ENCODE measurements at regions of chr7 and their contacts with region 1.

Region 1: DNA sequence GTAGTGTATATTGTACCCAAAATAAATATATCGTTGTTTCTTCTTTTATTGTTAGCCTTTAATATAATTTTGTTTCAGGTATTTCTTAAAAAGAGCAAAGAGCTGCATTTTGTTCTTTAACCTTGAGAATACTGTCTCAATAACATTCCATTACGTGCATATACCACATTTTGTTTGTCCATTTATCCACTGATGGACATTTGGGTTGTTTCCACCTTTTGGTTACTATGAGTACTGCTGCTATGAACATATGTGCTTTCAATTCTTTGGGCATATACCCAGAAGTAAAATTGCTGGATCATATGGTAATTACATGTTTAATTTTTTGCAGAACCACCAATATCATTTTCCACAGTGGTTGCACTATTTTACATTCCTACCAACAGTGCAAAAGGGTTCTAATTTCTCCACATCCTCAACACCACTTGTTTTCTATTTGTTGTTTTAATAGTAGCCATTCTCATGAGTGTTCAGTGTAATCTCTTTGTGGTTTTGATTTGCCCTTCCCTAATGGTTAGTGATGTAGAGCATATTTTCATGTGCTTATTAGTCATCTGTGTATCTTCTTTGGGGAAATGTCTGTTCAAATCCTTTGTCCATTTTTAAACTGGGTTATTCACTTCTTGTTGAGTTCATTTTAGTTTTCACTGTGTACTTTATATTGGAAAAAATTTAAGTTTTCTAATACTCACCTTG is 102.0 kb downstream of the HIBADH start:
- DNase-seq: peak; percentile 91
- ATAC-seq: peak; percentile 95
- H3K4me3 ChIP-seq: no peak overlapping the region
- H3K27ac ChIP-seq: no peak overlapping the region
- H3K4me1 ChIP-seq: no peaks in the 10 kb centered on the region
- H3K27me3 ChIP-seq: no peaks in the 10 kb centered on the region
- CTCF ChIP-seq: no peak; the same call in 1 of the 2 replicates
- POLR2A ChIP-seq: no peak
- RAD21 ChIP-seq: no peak

Region 2: DNA sequence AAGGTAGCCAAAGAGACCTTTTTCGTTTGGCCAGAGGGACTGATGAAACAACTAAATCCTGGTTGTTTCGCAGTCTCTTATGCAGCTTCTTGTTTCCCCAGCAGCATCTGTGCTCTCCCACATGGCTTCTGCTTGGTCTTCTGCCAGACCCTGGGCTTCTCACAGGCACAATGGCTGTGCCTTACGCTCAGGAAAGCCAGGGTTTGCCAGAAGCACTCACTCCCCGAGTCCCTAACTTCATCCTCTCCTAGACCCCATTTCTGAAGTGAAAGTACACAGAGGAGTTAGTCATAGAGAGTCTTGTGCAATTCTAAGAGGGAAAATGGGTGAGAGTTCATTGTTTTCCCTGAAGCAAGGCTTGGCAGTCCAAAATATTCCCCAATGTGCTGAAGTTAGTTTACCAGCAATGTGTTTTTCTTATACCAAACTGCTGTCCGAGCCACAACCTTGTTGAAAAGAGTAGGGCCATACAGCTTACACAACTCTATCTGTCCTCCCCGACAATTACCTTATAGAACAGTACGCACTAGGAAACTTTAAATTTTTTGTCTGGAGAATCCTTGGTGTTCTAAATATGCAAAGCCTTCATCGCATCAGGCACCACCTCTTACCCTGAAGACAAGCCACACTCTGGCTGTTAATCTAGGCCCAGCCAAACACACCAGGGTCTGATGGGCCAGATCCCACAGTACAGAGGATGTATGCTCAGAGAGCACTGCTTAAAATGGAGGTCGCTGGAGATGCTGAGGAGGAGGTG is 196.2 kb before region 1 on chr7:
- CTCF ChIA-PET with region 1: no interaction called
- POLR2A ChIA-PET with region 1: no interaction called
- dilution Hi-C with region 1: no loop called
- in situ Hi-C with region 1: no loop called
- intact Hi-C with region 1: loop called (anchors 10 kb)
- DNase-seq: peak; percentile 69
- ATAC-seq: peak; percentile 83
- H3K4me3 ChIP-seq: peak overlapping the region; percentile 21; the same call in 1 of the 2 replicates
- H3K27ac ChIP-seq: peak overlapping the region; percentile 71; the same call in 1 of the 2 replicates
- H3K4me1 ChIP-seq: peaks cover 9% of the 10 kb centered on the region
- H3K27me3 ChIP-seq: peaks cover 2% of the 10 kb centered on the region
- CTCF ChIP-seq: no peak
- POLR2A ChIP-seq: no peak
- RAD21 ChIP-seq: no peak

Measured in IMR-90 (cell line).